Heart right ventricle (tissue), 16 donors: ENCODE measurements at regions of chr11 and their contacts with region 1.

Region 1: DNA sequence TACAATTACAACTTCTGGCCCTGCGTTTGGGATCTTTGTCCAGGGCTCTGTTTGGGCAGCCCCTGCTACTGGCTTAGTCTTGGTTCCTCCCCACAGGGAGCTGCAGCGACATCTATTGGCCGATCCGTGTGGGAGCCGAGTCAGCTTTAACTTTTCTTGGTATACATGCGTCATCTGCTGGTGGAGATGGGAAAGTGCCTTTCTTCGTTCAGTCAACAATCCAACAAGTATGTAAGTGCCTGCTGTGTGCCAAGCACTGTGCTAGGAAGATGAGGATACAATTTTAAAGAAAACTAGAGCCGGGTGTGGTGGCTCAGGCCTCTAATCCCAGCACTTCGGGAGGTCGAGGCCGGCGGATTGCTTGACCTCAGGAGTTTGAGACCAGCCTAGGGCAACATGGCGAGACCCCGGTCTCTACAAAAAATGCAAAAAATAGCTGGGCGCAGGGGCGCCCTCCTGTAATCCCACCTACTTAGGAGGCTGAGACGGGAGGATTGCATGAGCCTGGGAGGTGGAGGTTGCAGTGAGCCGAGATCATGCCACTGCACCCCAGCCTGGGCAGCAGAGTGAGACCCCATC is 8.2 kb downstream of the TPBGL start:
- DNase-seq: peak; percentile 86 to 90
- ATAC-seq: peak; percentile 86 to 95 (median 91)
- H3K4me3 ChIP-seq: no peak overlapping the region
- H3K27ac ChIP-seq: no peak overlapping the region
- H3K4me1 ChIP-seq: peaks cover 0 to 3% (median 0%) of the 10 kb centered on the region in 9 donors
- H3K27me3 ChIP-seq: peaks cover 0 to 32% (median 17%) of the 10 kb centered on the region in 7 donors
- CTCF ChIP-seq: peak; percentile 97 to 100 (median 100)

Region 2: DNA sequence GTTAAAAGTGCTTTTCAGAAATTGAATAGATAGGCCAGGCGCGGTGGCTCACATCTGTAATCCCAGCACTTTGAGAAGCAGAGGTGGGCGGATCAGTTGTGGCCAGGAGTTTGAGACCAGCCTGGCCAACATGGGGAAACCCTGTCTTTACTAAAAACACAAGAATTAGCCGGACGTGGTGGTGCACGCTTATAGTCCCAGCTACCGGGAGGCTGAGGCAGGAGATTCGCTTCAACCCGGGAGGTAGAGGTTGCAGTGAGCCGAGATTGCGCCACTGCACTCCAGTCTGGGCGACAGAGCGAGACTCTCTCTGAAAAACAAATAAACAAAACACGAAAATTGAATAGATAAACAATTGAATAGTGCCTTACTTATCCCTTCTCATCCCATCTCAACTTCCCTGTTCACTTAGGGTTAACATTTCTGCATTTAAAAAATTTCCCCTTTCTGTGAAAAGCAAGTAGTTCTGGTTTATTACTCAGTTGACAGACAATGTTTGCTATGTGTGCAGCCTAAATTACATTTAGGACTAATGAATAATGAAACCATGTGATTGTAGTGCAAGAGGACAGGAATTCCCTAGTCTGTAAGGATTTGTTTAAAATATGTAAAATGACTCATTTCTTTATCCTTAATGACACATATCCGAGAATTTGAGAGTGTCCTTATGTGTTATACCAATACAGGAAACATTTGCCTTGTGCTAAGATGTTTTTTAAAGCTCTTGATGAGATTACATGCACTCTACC is 494.1 kb before region 1 on chr11:
- intact Hi-C with region 1: no loop called
- DNase-seq: no peak
- ATAC-seq: peak in 3 of 8 donors; percentile 48 to 70 (median 49)
- H3K4me3 ChIP-seq: no peak overlapping the region
- H3K27ac ChIP-seq: peak overlapping the region in 2 of 10 donors; percentile 47 to 55
- H3K4me1 ChIP-seq: peaks cover 0 to 69% (median 35%) of the 10 kb centered on the region in 9 donors
- H3K27me3 ChIP-seq: no peaks in the 10 kb centered on the region
- CTCF ChIP-seq: no peak

Region 3: GRCh38 chr11:74929431-74930363 is 319.1 kb before region 1 on chr11:
- intact Hi-C with region 1: loop called (anchors 2 to 10 kb)
- DNase-seq: peak in 1 of 2 donors; percentile 74
- ATAC-seq: peak; percentile 78 to 89 (median 85)
- H3K4me3 ChIP-seq: no peak overlapping the region
- H3K27ac ChIP-seq: no peak overlapping the region
- H3K4me1 ChIP-seq: no peaks in the 10 kb centered on the region
- H3K27me3 ChIP-seq: no peaks in the 10 kb centered on the region
- CTCF ChIP-seq: peak; percentile 75 to 91 (median 85)

Region 4: DNA sequence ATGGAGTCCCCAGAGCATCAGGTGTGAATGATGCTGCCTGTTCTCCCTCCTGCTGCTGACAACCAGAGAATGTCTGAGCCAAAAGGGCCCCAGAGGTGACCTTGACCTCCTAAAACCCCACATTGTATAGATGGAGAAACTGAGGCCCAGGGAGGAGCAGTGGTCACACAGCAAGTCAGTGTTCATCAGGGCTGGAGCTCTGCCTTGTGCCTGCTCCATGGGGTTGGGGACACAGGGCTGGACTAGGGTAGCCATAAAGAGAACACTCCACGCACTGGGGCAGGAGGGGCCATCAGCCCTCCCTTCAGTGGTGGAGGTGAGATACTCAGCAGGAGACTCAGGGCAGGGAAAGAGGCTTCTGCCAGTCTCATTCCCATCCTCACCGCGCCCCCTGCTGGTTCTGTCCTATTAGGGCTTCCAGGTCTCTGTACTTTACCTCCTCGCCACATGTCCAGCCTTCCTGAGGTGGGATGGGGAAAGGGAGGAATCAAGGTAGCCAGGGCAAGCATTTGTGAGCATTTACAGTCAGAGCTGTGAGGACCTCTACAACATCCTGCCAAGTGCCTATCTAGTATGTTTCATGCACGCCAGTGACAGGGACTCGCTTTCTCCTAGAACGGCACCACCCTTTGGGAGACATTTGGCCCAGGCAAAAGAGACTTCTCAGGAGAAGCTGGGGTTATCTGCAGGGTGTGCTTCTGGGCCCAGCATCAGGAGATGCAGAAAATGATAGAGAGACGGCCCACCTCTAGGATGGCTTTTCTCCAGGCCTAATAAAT is 216.8 kb before region 1 on chr11:
- intact Hi-C with region 1: loop called in 1 of 10 experiments (anchors 5 kb)
- DNase-seq: peak; percentile 70 to 74
- ATAC-seq: peak; percentile 63 to 82 (median 78)
- H3K4me3 ChIP-seq: no peak overlapping the region
- H3K27ac ChIP-seq: peak overlapping the region in 1 of 10 donors; percentile 9
- H3K4me1 ChIP-seq: peaks cover 0 to 12% (median 0%) of the 10 kb centered on the region in 9 donors
- H3K27me3 ChIP-seq: no peaks in the 10 kb centered on the region
- CTCF ChIP-seq: peak; percentile 50 to 76 (median 72)

Region 5: GRCh38 chr11:75142714-75143419 is 105.9 kb before region 1 on chr11:
- intact Hi-C with region 1: loop called (anchors 1 to 5 kb)
- DNase-seq: peak; percentile 68 to 76
- ATAC-seq: peak; percentile 76 to 93 (median 89)
- H3K4me3 ChIP-seq: no peak overlapping the region
- H3K27ac ChIP-seq: peak overlapping the region in 5 of 10 donors; percentile 1 to 71 (median 56)
- H3K4me1 ChIP-seq: peaks cover 3 to 60% (median 25%) of the 10 kb centered on the region in 9 donors
- H3K27me3 ChIP-seq: peaks cover 0 to 19% (median 4%) of the 10 kb centered on the region in 7 donors
- CTCF ChIP-seq: no peak

Region 6: GRCh38 chr11:75204685-75205563 is 43.9 kb before region 1 on chr11:
- intact Hi-C with region 1: loop called in 6 of 10 experiments (anchors 5 kb)
- DNase-seq: peak; percentile 89 to 90
- ATAC-seq: peak; percentile 93 to 97 (median 96)
- H3K4me3 ChIP-seq: no peak overlapping the region
- H3K27ac ChIP-seq: peak overlapping the region in 2 of 10 donors; percentile 9 to 48
- H3K4me1 ChIP-seq: peaks cover 0 to 12% (median 3%) of the 10 kb centered on the region in 9 donors
- H3K27me3 ChIP-seq: peaks cover 0 to 3% (median 0%) of the 10 kb centered on the region in 7 donors
- CTCF ChIP-seq: peak; percentile 84 to 95 (median 93)